ENCODE measurements at regions of chr12 and their contacts with region 1.

Region 1: GRCh38 chr12:119176267-119176849 is 2.4 kb upstream of the HSPB8 start:
- DNase-seq: peak; percentile 92
- ATAC-seq: peak; percentile 63

Region 2: GRCh38 chr12:119136811-119137410 is 39.4 kb before region 1 on chr12:
- intact Hi-C with region 1: no loop called
- DNase-seq: no peak
- ATAC-seq: no peak

Region 3: DNA sequence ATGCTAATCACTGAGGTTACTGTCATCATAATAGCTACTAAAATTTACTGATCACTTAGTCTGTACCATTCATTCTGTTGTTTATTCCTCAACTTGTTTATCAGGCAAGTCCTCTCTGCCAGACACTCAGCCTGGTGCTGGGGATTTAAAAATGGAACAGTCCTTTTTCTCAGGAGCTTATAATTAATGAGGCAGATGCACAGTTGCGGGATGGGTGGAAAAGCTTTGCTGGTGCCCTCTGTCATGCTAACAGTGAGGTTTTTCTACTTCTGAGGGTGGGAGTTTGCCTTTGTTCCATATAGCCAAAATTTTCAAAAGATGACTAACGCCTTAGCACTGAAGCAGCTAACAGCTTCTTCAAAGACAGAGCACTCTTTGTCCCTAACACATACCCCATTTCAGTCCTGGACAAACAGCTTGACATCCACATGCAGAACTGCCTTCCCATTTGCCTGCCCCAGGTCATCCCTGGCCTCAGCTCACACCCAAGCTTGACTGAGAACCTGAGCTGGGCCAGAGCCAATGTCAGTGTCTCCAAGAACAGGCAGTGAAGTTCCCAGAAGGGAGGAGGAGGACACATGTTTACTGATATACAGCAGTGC is 28.4 kb before region 1 on chr12:
- intact Hi-C with region 1: no loop called
- DNase-seq: no peak
- ATAC-seq: no peak

Region 4: DNA sequence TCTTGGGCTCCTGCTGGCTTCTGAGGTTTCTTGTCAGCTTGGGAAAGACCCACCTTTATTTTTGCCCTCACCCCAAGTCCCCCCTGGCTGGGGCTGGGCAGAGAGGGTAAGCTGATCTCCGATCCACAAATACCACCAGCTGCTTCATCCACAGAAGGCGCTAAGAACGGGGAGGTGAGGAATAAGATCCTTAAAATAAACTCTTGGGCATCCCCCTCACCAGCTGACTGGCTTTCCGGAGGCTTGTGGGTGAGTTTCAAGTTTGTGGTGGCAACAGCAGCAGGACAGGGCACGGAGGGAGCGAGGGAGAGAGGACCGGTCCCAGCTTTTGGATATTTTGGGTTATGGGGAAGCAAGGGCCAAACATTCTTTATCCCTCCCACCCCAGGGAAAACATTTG is 18.4 kb before region 1 on chr12:
- intact Hi-C with region 1: loop called (anchors 1 kb)
- DNase-seq: no peak
- ATAC-seq: peak; percentile 17

Region 5: DNA sequence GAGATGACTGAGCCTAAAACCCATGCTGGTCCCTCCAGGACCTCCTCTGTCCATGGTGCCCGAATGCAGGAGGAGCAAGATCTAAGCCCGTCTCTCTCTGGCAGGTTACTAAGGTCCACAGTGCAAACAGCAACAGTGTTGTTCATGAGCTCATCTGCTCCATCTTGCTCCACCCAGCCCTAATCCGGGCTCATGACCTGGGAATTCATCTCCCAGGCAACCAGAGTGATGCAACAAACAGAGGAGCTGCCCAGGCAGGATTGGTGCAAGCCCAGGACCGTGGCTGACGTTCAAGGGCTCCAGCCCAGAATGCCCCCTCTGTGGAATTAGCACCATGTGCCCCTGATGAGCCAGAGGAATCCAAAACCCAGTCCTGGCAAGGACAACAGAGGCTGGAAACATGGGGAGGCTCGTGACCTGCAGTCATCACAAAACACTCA is 32.3 kb after region 1 on chr12:
- intact Hi-C with region 1: loop called (anchors 2 kb)
- DNase-seq: peak; percentile 92
- ATAC-seq: peak; percentile 93

Region 6: DNA sequence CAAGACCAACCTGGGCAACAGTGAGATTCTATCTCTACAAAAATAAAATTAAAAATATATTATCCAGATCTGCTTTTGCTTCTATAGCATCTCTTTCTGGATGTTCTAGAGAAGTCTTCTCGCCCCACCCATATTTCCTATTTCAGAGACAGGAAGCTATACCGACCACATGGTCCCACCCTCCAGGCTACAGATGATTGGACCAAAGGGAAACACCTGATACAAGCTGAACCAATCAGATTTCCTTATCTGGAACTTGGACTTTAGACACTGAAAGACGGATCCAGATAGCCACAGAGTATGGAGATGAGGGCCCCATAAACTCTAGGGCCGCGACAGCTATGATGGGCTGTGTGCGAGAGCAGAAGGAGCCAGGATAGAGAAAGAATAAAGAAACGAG is 206.8 kb after region 1 on chr12:
- intact Hi-C with region 1: loop called (anchors 5 kb)
- DNase-seq: no peak
- ATAC-seq: no peak

Region 7: DNA sequence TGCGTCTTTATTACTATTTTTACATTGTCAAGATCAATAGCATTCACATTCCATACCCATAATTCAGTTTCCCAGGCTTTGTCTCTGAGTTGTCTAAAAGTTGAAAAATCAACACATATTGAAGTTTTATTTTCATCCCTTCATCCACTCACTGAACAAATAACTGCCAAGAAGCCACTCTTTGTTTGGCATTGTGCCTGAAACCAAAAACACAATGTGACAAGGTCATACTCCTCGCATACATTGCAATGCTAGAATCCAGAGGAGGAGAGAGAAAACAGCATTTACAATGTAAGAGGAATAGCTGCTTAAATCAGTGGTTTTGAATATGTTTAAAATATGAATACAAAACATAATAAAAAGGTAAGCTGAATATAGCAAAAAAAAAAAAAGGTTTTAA is 229.9 kb after region 1 on chr12:
- intact Hi-C with region 1: loop called (anchors 2 kb)
- DNase-seq: no peak
- ATAC-seq: peak; percentile 37

Measured in Right ventricle myocardium inferior (tissue), 1 donor.